ENCODE measurements at regions of chr16 and their contacts with region 1.

Region 1: GRCh38 chr16:610513-611334 is 20.1 kb upstream of the WFIKKN1 start:
- DNase-seq: peak; percentile 78
- H3K4me3 ChIP-seq: no peak overlapping the region
- H3K27ac ChIP-seq: no peak overlapping the region
- H3K4me1 ChIP-seq: no peaks in the 10 kb centered on the region; a peak in 1 of 4 replicates
- H3K27me3 ChIP-seq: no peaks in the 10 kb centered on the region
- CTCF ChIP-seq: peak; percentile 58
- EP300 ChIP-seq: no peak
- RAD21 ChIP-seq: peak; percentile 58

Region 2: DNA sequence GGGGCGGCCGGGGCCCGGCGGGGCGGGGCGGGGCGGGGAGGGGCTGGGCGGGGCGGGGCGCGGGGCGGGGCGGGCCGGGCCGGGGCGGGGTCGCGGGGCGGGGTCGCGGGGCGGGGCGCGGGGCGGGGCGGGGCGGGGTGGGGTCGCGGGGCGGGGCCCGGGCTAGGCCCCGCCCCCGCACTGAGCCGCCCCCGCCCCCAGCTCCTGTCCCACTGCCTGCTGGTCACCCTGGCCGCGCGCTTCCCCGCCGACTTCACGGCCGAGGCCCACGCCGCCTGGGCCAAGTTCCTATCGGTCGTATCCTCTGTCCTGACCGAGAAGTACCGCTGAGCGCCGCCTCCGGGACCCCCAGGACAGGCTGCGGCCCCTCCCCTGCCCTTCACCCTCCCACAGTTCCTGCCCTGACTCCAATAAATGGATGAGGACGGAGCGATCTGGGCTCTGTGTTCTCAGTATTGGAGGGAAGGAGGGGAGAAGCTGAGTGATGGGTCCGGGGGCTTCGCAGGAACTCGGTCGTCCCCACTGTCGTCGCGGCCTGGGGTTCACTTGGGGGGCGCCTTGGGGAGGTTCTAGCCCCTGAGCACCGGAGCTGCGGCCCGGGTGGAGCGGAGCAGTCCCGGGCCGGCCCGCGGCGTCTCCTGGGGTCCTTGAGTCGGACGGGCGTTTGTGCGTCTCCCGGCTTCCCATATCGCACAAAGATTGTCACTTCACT is 445.7 kb before region 1 on chr16:
- CTCF ChIA-PET with region 1: no interaction called
- POLR2A ChIA-PET with region 1: no interaction called
- DNase-seq: peak; percentile 94
- H3K4me3 ChIP-seq: peak overlapping the region in 1 of 2 experiments; percentile 32; a peak in 2 of 4 replicates
- H3K27ac ChIP-seq: no peak overlapping the region
- H3K4me1 ChIP-seq: peaks cover 0 to 13% of the 10 kb centered on the region in 2 experiments; a peak in 1 of 4 replicates
- H3K27me3 ChIP-seq: peaks cover 28% of the 10 kb centered on the region
- CTCF ChIP-seq: no peak
- EP300 ChIP-seq: no peak
- RAD21 ChIP-seq: no peak

Region 3: GRCh38 chr16:391885-392335 is 218.8 kb before region 1 on chr16:
- CTCF ChIA-PET with region 1: no interaction called
- POLR2A ChIA-PET with region 1: no interaction called
- DNase-seq: peak; percentile 82
- H3K4me3 ChIP-seq: no peak overlapping the region; a peak in 1 of 4 replicates
- H3K27ac ChIP-seq: no peak overlapping the region
- H3K4me1 ChIP-seq: peaks cover 0 to 7% of the 10 kb centered on the region in 2 experiments; a peak in 2 of 4 replicates
- H3K27me3 ChIP-seq: no peaks in the 10 kb centered on the region
- CTCF ChIP-seq: peak; percentile 80
- EP300 ChIP-seq: no peak
- RAD21 ChIP-seq: peak; percentile 86

Region 4: DNA sequence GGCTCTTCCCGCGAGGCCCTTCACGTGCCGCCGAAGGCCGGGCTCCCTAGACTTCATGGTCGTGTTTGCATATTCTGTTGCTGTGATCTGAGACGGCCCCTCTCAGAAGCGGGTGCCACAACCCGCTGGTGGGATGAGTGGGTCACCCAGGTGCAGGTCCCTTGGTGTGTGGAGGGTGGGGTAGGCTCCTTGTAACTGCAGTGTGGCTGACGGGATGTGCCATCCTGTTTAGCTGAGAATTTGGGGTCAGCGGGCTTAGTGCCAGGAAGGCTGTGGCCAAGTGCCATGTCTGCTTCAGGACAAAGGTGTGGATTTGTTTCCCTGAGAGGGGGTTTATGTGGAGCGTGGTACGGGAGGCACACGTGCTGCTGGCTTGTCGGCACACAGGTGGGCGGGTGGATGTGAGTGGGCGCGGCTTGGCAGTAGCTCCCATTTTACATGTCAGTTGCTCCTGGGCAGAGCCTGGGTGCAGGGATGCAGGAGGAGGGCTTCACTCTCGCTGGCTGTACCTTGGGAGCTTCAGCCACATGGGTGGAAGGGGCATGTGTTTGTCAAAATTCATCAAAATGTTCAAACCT is 10.9 kb after region 1 on chr16:
- CTCF ChIA-PET with region 1: interaction called, 11 read pairs
- POLR2A ChIA-PET with region 1: no interaction called
- DNase-seq: no peak
- H3K4me3 ChIP-seq: no peak overlapping the region
- H3K27ac ChIP-seq: no peak overlapping the region
- H3K4me1 ChIP-seq: peaks cover 4 to 13% of the 10 kb centered on the region in 2 experiments; a peak in 2 of 4 replicates
- H3K27me3 ChIP-seq: no peaks in the 10 kb centered on the region
- CTCF ChIP-seq: no peak
- EP300 ChIP-seq: no peak
- RAD21 ChIP-seq: no peak

Region 5: GRCh38 chr16:761987-762513 is 151.3 kb after region 1 on chr16:
- CTCF ChIA-PET with region 1: no interaction called
- POLR2A ChIA-PET with region 1: no interaction called
- DNase-seq: no peak
- H3K4me3 ChIP-seq: no peak overlapping the region
- H3K27ac ChIP-seq: no peak overlapping the region
- H3K4me1 ChIP-seq: no peaks in the 10 kb centered on the region
- H3K27me3 ChIP-seq: no peaks in the 10 kb centered on the region
- CTCF ChIP-seq: no peak
- EP300 ChIP-seq: no peak
- RAD21 ChIP-seq: no peak

Measured in SK-N-SH (cell line).